Activated T-helper 1 cell treated with anti-CD3 and anti-CD28 coated beads, Interleukin-12 subunit alpha, Interleukin-12 subunit beta, Interleukin-2, Interleukin-4 antibody, amounts not matched to agents 30 ng/mL and 10 ng/mL and 1 ng/mL, durations not matched to agents 14 hours and 24 hours and 36 hours (primary cell): ENCODE measurements at regions of chr14 and their contacts with region 1.

Region 1: DNA sequence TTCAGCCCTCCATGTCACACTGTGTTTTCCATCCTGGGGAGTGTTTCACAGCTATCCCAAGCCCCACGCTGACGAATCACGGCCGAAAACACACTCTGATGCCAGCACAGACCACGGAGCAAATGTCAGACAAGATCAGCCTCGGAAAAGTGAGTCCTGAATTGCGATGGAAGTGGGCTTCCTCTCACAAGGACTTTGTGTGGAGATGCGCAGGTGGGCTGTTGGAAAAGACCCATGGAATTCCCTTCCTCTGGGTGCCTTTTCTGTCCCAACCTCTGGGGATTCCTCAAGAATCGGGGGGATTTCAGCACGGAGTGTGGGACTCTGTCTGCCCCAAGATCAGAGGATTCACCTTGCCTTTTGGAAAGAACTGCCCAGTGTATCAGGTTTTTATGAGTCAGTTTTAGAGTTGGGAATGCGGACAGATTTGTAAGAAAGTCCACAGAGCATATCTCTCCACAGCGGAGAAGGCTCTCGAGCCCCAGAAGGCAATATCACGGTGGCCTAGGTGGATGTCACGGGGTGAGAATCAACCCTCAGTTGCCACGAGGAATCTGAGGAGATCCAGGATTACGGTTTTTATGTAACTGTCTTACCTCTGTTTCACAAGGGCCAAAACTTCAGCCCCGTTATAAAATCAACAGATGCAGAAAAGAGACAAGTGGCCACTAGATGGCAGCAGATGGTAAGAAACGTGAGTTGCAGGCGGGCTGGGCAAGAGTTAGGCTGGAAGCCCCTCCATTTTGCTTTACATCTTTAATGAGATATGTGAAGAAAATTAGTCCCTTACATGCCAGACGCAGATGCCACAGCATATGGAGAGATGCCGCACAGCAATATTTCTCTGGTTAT is 201.9 kb downstream of the DAD1 start:
- DNase-seq: no peak
- H3K4me3 Mint-ChIP-seq: no peak overlapping the region
- H3K27ac Mint-ChIP-seq: no peak overlapping the region
- H3K4me1 Mint-ChIP-seq: no peaks in the 10 kb centered on the region
- H3K27me3 Mint-ChIP-seq: no peaks in the 10 kb centered on the region

Region 2: DNA sequence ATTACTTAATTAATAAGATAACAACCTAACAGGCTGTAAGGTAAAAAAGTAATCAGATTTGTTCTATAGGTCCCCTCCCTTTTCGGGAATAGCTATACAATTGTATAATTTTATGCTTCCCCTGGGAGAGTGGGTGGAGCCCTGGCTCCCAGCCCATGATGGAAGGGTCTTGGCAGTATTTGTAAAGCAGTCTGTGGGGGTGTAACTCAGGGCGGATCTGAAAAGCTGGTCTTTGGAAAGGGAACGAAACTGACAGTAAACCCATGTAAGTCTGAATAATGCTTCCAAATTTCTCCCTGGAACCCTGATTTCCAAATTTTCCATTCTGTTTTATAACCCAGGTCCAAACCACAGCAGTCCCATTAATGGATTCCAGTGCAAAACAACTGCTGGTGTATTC is 91.5 kb after region 1 on chr14:
- intact Hi-C with region 1: loop called (anchors 5 kb)
- DNase-seq: no peak
- H3K4me3 Mint-ChIP-seq: peak overlapping the region; percentile 91
- H3K27ac Mint-ChIP-seq: no peak overlapping the region
- H3K4me1 Mint-ChIP-seq: no peaks in the 10 kb centered on the region
- H3K27me3 Mint-ChIP-seq: no peaks in the 10 kb centered on the region